Dorsolateral prefrontal cortex (tissue), 120 donors: ENCODE measurements at regions of chr1 and their contacts with region 1.

Region 1: GRCh38 chr1:63691701-63692425 is 82.0 kb upstream of the ROR1 start:
- DNase-seq: peak in 4 of 10 donors; percentile 12 to 66 (median 47)
- H3K4me3 ChIP-seq: no peak overlapping the region
- H3K27ac ChIP-seq: peak overlapping the region in 48 of 59 donors; percentile 5 to 79 (median 48)
- H3K27me3 ChIP-seq: no peaks in the 10 kb centered on the region
- CTCF ChIP-seq: peak; percentile 43 to 88 (median 79)

Region 2: DNA sequence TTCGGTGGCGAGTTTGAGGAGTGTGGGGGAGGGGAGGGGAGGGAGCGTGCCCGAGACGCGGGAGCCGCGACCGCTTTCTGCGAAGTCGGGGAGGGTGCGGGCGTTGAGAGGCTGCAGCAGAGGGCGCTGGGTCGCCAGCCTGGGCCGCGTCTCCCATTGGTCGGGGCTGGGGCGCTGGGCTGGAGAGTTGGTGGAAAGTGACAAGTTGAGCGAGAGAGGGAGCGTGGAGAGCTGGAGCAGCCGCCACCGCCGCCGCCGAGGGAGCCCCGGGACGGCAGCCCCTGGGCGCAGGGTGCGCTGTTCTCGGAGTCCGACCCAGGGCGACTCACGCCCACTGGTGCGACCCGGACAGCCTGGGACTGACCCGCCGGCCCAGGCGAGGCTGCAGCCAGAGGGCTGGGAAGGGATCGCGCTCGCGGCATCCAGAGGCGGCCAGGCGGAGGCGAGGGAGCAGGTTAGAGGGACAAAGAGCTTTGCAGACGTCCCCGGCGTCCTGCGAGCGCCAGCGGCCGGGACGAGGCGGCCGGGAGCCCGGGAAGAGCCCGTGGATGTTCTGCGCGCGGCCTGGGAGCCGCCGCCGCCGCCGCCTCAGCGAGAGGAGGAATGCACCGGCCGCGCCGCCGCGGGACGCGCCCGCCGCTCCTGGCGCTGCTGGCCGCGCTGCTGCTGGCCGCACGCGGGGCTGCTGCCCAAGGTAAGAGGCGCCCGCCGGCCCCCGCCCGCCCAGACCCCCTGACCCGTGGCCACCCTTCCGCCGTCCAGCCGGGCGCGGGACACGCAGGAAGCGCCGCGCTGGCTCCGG is 82.2 kb after region 1 on chr1 and contains the start of gene ROR1:
- intact Hi-C with region 1: loop called in 1 of 2 experiments (anchors 2 kb)
- DNase-seq: peak; percentile 75 to 94 (median 81)
- H3K4me3 ChIP-seq: peak within 1 kb of the TSS; percentile 55 to 87 (median 72)
- H3K27ac ChIP-seq: peak within 1 kb of the TSS in 46 of 59 donors; percentile 31 to 89 (median 74)
- H3K27me3 ChIP-seq: peaks cover 0 to 12% (median 0%) of the 10 kb centered on the region in 45 donors
- CTCF ChIP-seq: peak in 55 of 56 donors; percentile 30 to 87 (median 69)
- total RNA-seq, gene ROR1: 0.53 to 5.6 (median 3.1) TPM

Region 3: DNA sequence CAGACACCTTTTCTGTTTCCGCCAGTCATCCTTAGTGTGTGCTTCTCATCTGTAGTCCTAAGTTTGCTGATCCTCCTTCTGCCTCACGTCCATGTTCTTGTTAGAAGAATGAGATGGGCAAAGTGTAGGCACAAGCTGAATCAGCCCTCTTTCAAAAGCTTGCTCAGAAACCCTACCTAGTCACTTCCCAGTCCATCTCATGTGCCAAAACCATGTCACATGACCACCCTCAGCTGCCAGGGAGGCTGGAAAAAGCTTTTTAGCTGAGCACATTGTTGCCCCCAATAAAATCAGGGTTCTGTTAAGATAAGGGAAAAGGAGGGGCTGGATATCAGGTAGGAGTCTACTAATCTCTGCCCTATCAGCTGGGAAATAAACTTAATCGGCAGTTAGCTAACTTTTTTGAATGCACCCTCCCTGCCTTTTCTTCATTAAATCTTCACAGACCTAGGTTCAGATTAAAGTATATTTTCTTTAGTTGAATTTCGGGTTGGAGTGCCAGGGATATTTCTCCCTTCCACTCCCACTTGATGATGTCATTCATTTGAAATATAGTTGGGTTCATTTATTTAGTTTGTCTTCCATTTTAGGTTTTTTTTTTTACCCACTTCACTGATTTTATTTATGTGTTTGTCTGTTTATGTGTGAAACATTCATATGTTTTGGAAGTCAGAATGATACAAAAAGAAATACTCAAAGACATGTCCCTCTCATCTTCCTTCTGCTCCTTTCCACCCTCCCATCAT is 211.2 kb after region 1 on chr1:
- intact Hi-C with region 1: loop called in 1 of 2 experiments (anchors 10 kb)
- DNase-seq: no peak
- H3K4me3 ChIP-seq: no peak overlapping the region
- H3K27ac ChIP-seq: no peak overlapping the region
- H3K27me3 ChIP-seq: no peaks in the 10 kb centered on the region
- CTCF ChIP-seq: no peak

Region 4: GRCh38 chr1:64163970-64164369 is 472.1 kb after region 1 on chr1:
- intact Hi-C with region 1: loop called in 1 of 2 experiments (anchors 10 kb)
- DNase-seq: no peak
- H3K4me3 ChIP-seq: no peak overlapping the region
- H3K27ac ChIP-seq: no peak overlapping the region
- H3K27me3 ChIP-seq: no peaks in the 10 kb centered on the region
- CTCF ChIP-seq: peak in 52 of 56 donors; percentile 24 to 71 (median 52)